ENCODE measurements at regions of chrX and their contacts with region 1.

Region 1: GRCh38 chrX:78331708-78332107 is 4.3 kb upstream of the CYSLTR1 start:
- DNase-seq: no peak
- H3K4me3 ChIP-seq: no peak overlapping the region
- H3K27ac ChIP-seq: no peak overlapping the region
- H3K4me1 ChIP-seq: peaks cover 4% of the 10 kb centered on the region
- H3K27me3 ChIP-seq: no peaks in the 10 kb centered on the region
- CTCF ChIP-seq: no peak

Region 2: GRCh38 chrX:78092296-78092695 is 239.4 kb before region 1 on chrX:
- CTCF ChIA-PET with region 1: no interaction called
- POLR2A ChIA-PET with region 1: no interaction called
- intact Hi-C with region 1: no loop called
- DNase-seq: peak; percentile 18
- H3K4me3 ChIP-seq: no peak overlapping the region
- H3K27ac ChIP-seq: no peak overlapping the region
- H3K4me1 ChIP-seq: no peaks in the 10 kb centered on the region
- H3K27me3 ChIP-seq: no peaks in the 10 kb centered on the region
- CTCF ChIP-seq: peak; percentile 44

Region 3: DNA sequence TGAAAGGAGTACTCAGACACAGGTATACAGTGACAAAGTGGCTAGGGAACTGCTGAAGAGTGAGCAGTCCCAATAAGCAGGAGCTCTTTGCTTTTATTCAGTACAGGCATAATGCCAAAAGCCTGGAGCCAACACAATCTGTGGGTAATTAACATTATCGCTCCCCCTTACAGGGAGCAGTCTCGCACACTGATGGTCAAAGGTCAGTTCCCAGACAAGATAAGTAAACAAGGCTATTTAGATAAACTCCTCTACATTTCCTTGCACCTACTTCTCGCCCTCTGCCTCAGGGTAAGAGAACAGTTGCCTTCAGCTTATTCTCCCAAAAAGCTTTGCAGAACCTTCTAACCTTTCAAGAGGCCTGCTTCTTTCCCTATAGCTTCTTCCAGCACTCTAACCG is 118.4 kb before region 1 on chrX:
- CTCF ChIA-PET with region 1: no interaction called
- POLR2A ChIA-PET with region 1: no interaction called
- intact Hi-C with region 1: no loop called
- DNase-seq: no peak
- H3K4me3 ChIP-seq: no peak overlapping the region
- H3K27ac ChIP-seq: no peak overlapping the region
- H3K4me1 ChIP-seq: no peaks in the 10 kb centered on the region
- H3K27me3 ChIP-seq: no peaks in the 10 kb centered on the region
- CTCF ChIP-seq: no peak

Region 4: GRCh38 chrX:78237134-78237533 is 94.6 kb before region 1 on chrX:
- CTCF ChIA-PET with region 1: no interaction called
- POLR2A ChIA-PET with region 1: no interaction called
- intact Hi-C with region 1: no loop called
- DNase-seq: no peak
- H3K4me3 ChIP-seq: no peak overlapping the region
- H3K27ac ChIP-seq: no peak overlapping the region
- H3K4me1 ChIP-seq: no peaks in the 10 kb centered on the region
- H3K27me3 ChIP-seq: no peaks in the 10 kb centered on the region
- CTCF ChIP-seq: no peak

Region 5: GRCh38 chrX:78366576-78366975 is 34.9 kb after region 1 on chrX:
- CTCF ChIA-PET with region 1: no interaction called
- POLR2A ChIA-PET with region 1: interaction called, 12 read pairs
- intact Hi-C with region 1: no loop called
- DNase-seq: no peak
- H3K4me3 ChIP-seq: no peak overlapping the region
- H3K27ac ChIP-seq: no peak overlapping the region
- H3K4me1 ChIP-seq: no peaks in the 10 kb centered on the region
- H3K27me3 ChIP-seq: no peaks in the 10 kb centered on the region
- CTCF ChIP-seq: no peak

Region 6: DNA sequence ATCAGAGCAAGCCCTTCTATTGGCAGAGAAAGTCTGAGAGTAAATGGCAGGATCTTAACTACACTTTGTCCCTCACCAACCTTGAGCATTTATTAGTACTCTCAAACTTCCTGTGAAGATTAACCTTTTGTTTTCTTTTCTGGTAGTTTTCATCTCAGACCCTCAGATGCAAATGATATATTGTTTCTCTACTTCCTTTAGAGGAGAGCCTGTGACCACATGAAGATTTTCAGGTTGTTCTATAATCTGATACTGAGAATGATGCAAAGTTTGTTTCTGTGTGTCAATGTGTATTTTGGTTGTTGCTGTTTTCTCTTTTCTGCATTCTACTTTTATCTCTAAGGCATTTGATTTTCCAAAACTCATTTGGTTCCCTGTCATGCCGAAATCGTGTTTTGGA is 161.5 kb after region 1 on chrX:
- CTCF ChIA-PET with region 1: no interaction called
- POLR2A ChIA-PET with region 1: no interaction called
- intact Hi-C with region 1: no loop called
- DNase-seq: no peak
- H3K4me3 ChIP-seq: no peak overlapping the region
- H3K27ac ChIP-seq: no peak overlapping the region
- H3K4me1 ChIP-seq: no peaks in the 10 kb centered on the region
- H3K27me3 ChIP-seq: no peaks in the 10 kb centered on the region
- CTCF ChIP-seq: no peak